ENCODE measurements at regions of chr15 and their contacts with region 1.

Region 1: DNA sequence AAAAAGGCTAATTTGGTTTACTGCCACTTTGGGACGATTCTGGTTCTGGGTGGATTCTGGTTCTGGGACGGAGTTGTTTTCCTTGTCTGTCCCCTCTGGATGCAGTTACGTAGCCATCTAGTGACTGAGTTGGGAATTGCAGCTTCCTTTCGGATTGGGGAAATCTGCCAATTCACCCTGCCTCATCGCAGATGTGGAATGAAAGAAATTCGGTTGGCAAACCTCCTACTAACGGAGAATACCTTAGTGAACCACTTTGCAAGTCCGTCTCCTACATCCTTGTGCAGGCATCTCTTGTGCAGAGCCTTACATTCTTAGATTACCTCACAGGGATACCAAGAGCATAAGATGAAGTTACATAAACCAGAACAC is 31.5 kb upstream of the AP4E1 start:
- DNase-seq: peak; percentile 93
- ATAC-seq: peak; percentile 91
- H3K4me3 ChIP-seq: peak overlapping the region; percentile 38 to 50
- H3K27ac ChIP-seq: peak overlapping the region; percentile 30
- H3K4me1 ChIP-seq: peaks cover 6% of the 10 kb centered on the region; the same call in 1 of the 2 replicates
- H3K27me3 ChIP-seq: peaks cover 7% of the 10 kb centered on the region; the same call in 1 of the 2 replicates
- CTCF ChIP-seq: peak; percentile 97

Region 2: GRCh38 chr15:49492824-49493223 is 1384.2 kb before region 1 on chr15:
- CTCF ChIA-PET with region 1: no interaction called
- POLR2A ChIA-PET with region 1: no interaction called
- in situ Hi-C with region 1: no loop called
- intact Hi-C with region 1: no loop called
- DNase-seq: no peak
- ATAC-seq: no peak
- H3K4me3 ChIP-seq: no peak overlapping the region
- H3K27ac ChIP-seq: no peak overlapping the region
- H3K4me1 ChIP-seq: no peaks in the 10 kb centered on the region
- H3K27me3 ChIP-seq: no peaks in the 10 kb centered on the region; the same call in 1 of the 2 replicates
- CTCF ChIP-seq: no peak

Region 3: DNA sequence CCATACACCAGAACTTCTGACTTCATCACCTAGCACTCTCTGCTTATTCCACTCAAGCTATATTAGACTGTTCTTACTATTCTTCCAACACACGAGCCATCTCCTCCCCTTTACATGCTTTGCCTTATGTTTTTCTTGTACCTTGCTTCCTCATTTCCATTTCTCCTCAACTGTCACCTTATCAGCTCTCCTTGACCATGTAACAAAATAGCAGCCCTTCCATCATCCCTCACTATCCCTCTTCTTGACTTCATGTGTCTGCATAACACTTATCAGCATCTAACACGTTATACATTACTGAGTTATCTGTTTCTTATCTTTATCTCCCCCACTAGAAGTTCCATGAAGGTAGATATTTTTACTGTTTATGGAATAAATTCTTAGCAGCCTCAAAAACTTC is 235.7 kb before region 1 on chr15:
- CTCF ChIA-PET with region 1: interaction called, 11 read pairs
- POLR2A ChIA-PET with region 1: no interaction called
- in situ Hi-C with region 1: no loop called
- intact Hi-C with region 1: no loop called
- DNase-seq: no peak
- ATAC-seq: no peak
- H3K4me3 ChIP-seq: no peak overlapping the region
- H3K27ac ChIP-seq: no peak overlapping the region
- H3K4me1 ChIP-seq: no peaks in the 10 kb centered on the region
- H3K27me3 ChIP-seq: no peaks in the 10 kb centered on the region
- CTCF ChIP-seq: no peak

Region 4: GRCh38 chr15:50675536-50676144 is 201.3 kb before region 1 on chr15:
- CTCF ChIA-PET with region 1: no interaction called
- POLR2A ChIA-PET with region 1: no interaction called
- in situ Hi-C with region 1: no loop called
- intact Hi-C with region 1: loop called (anchors 5 kb)
- DNase-seq: no peak
- ATAC-seq: no peak
- H3K4me3 ChIP-seq: no peak overlapping the region
- H3K27ac ChIP-seq: no peak overlapping the region
- H3K4me1 ChIP-seq: no peaks in the 10 kb centered on the region
- H3K27me3 ChIP-seq: no peaks in the 10 kb centered on the region
- CTCF ChIP-seq: peak; percentile 72; the same call in 1 of the 2 replicates

Region 5: DNA sequence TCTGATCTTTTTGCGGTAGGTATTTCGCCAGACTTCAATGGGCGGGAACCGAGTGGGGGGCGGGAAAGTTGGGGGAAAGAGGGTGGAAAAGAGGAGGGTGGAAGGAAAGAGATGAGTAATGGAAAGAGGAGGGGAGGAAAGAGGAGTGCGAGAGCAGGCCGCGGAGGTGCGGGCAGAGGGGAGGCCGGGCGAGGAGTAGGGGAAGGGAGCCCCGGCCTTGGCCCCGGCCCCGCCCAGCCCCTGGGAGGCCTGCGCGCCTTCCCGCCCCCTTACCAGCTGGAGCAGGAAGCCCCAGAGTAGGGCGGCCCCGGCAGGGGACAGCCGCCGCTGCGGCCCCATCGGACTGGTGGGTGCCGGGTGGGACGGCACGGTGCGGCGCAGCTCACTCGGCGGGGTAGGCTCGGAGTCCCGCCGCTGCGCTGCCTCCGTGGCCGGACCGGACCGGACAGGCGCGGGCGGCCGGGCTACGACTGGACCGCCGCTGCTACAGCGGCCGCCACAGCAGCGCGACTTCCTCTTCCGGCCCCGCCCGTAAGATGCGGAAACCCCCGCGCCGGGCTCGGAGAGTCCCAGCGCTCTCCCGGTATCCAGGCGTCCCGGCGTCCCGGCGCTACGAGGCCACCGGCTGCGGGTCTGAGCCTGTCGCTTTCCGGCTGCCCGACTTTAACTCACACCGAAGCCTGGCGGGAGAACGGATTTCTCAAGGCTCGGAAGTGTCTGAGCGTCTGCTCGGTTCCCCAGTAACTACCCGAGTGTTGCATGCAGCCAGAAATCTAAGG is 111.6 kb before region 1 on chr15 and contains the start of gene SPPL2A:
- CTCF ChIA-PET with region 1: interaction called, 3 read pairs
- POLR2A ChIA-PET with region 1: no interaction called
- in situ Hi-C with region 1: no loop called
- intact Hi-C with region 1: loop called (anchors 10 kb)
- DNase-seq: no peak
- ATAC-seq: peak; percentile 99
- H3K4me3 ChIP-seq: peak within 1 kb of the TSS; percentile 77 to 91
- H3K27ac ChIP-seq: peak within 1 kb of the TSS; percentile 98
- H3K4me1 ChIP-seq: peaks cover 14% of the 10 kb centered on the region; the same call in 1 of the 2 replicates
- H3K27me3 ChIP-seq: no peaks in the 10 kb centered on the region
- CTCF ChIP-seq: no peak
- total RNA-seq, gene SPPL2A: 154 TPM

Region 6: DNA sequence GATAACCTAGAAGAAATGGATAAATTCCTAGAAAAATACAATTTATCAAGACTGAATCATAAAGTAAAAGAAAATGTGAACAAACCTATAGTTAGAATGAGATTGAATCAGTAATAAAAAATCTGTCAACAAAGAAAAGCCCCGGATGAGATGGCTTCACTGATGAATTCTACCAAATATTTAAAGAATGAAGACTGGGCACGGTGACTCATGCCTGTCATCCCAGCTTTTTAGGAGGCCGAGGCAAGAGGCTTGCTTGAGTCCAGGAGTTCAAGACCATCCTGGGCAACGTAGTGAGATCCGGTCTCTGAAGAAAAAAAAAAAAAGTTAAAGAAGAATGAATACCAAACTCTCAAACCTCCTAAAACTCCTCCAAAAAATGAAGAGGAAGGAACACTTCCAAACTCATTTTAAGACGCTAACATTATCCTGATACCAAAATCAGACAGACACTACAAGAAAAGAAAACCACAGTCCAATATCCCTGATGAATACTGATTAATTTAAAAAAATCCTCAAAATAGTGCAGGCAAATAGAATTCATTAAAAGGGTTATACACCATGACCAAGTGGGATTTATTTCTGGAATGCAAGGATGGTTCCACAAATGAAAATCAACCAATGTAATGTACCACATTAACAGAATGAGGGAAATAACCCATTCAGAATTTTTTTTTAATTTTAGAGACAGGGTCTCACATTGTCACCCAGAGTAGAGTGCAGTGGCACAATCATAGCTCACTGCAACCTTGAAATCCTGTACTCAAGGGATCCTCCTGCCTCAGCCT is 14.0 kb after region 1 on chr15:
- CTCF ChIA-PET with region 1: interaction called, 10 read pairs
- POLR2A ChIA-PET with region 1: no interaction called
- in situ Hi-C with region 1: no loop called
- intact Hi-C with region 1: no loop called
- DNase-seq: no peak
- ATAC-seq: no peak
- H3K4me3 ChIP-seq: no peak overlapping the region
- H3K27ac ChIP-seq: no peak overlapping the region
- H3K4me1 ChIP-seq: no peaks in the 10 kb centered on the region
- H3K27me3 ChIP-seq: no peaks in the 10 kb centered on the region
- CTCF ChIP-seq: no peak

Region 7: GRCh38 chr15:50933341-50933740 is 56.4 kb after region 1 on chr15:
- CTCF ChIA-PET with region 1: no interaction called
- POLR2A ChIA-PET with region 1: no interaction called
- in situ Hi-C with region 1: no loop called
- intact Hi-C with region 1: no loop called
- DNase-seq: no peak
- ATAC-seq: no peak
- H3K4me3 ChIP-seq: no peak overlapping the region
- H3K27ac ChIP-seq: no peak overlapping the region
- H3K4me1 ChIP-seq: no peaks in the 10 kb centered on the region
- H3K27me3 ChIP-seq: no peaks in the 10 kb centered on the region
- CTCF ChIP-seq: no peak

Measured in Panc1 (cell line).